H1 (cell line): ENCODE measurements at regions of chr4 and their contacts with region 1.

Region 1: DNA sequence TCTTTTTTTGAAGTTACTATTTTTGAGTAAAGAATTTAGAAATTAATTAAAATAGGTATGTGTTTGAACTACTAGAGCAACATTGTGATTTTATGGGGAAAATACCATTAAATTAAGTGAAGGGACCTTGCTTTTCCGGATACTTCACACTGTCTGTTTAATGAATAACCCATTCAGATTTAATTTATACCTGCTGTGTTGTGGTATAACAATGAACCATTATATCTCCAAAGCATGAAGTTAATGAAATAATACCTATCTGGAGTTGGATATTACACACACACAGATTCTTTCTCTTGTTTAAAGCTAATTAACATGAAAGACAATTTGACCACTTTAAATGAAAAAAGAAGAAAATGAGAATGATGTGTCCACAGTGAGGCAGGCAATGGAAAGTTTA is 195.0 kb upstream of the GPRIN3 start:
- DNase-seq: no peak
- H3K4me3 ChIP-seq: no peak overlapping the region
- H3K27ac ChIP-seq: no peak overlapping the region
- H3K4me1 ChIP-seq: no peaks in the 10 kb centered on the region
- H3K27me3 ChIP-seq: no peaks in the 10 kb centered on the region
- CTCF ChIP-seq: no peak
- EP300 ChIP-seq: no peak
- POLR2A ChIP-seq: no peak
- RAD21 ChIP-seq: no peak

Region 2: DNA sequence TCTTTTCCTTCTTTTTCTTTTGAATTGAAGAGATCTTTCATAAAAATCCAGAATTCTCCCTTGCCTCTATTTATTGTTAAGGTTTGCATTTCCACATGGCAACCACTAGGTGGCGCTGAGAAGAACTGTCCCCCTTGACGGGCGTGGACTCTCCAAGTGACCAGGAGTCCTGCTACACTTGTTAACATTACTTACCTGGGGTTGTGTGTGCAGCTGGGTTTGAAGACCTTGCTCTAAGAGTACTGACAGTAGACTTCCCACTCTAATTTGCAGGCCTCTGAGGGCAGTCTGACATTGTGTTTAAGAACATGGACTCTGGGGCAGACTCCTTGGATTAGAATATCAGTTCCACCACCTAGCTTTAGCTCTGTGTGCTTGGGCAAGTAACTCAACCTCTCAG is 247.7 kb before region 1 on chr4:
- CTCF ChIA-PET with region 1: no interaction called
- POLR2A ChIA-PET with region 1: no interaction called
- DNase-seq: peak in 1 of 2 experiments; percentile 63
- H3K4me3 ChIP-seq: no peak overlapping the region
- H3K27ac ChIP-seq: no peak overlapping the region
- H3K4me1 ChIP-seq: peaks cover 0 to 5% (median 3%) of the 10 kb centered on the region in 4 experiments; a peak in 5 of 7 replicates
- H3K27me3 ChIP-seq: no peaks in the 10 kb centered on the region
- CTCF ChIP-seq: peak; percentile 73 to 74 (median 74)
- EP300 ChIP-seq: no peak
- POLR2A ChIP-seq: no peak
- RAD21 ChIP-seq: peak; percentile 59 to 70

Region 3: GRCh38 chr4:89514811-89515210 is 12.2 kb after region 1 on chr4:
- CTCF ChIA-PET with region 1: interaction called, 12 read pairs
- POLR2A ChIA-PET with region 1: no interaction called
- DNase-seq: no peak
- H3K4me3 ChIP-seq: no peak overlapping the region
- H3K27ac ChIP-seq: no peak overlapping the region
- H3K4me1 ChIP-seq: peaks cover 0 to 6% (median 3%) of the 10 kb centered on the region in 4 experiments; a peak in 4 of 7 replicates
- H3K27me3 ChIP-seq: no peaks in the 10 kb centered on the region
- CTCF ChIP-seq: no peak
- EP300 ChIP-seq: no peak
- POLR2A ChIP-seq: no peak
- RAD21 ChIP-seq: no peak